ENCODE measurements at regions of chr18 and their contacts with region 1.

Region 1: DNA sequence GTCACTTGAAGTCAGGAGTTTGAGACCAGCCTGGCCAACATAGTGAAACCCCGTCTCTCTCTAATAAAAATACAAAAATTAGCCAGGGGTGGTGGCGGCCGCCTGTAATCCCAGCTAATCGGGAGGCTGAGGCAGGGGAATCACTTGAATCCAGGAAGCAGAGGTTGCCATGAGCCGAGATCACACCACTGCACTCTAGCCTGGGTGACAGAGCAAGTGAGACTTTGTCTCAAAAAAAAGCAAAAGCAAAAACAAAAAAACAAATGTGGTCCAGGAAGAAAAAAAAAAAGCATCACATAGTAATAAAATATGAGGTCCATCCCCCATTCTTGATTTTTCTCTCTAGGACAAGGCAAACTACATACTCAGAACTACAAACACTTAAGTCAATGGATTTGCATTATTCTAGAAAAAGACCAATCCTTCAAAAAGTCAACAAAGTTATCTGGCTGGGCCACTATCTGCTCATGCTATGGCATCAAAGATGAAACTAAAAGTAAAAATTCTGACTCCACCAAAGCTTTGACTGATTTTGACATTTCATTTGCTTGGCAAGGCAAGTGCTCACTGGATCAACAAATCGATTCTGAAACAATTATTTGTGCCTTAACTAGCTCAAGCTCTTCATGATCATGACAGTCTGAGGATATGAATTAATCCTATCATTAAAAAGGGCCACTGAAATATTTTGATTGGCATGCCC is 28.4 kb downstream of the MEX3C start:
- DNase-seq: no peak
- H3K4me3 ChIP-seq: no peak overlapping the region
- H3K4me3 Mint-ChIP-seq: no peak overlapping the region
- H3K27ac ChIP-seq: no peak overlapping the region
- H3K27ac Mint-ChIP-seq: peak overlapping the region in 1 of 7 donors; percentile 76
- H3K4me1 ChIP-seq: peaks cover 0 to 5% of the 10 kb centered on the region in 2 donors
- H3K4me1 Mint-ChIP-seq: peaks cover 13% of the 10 kb centered on the region
- H3K27me3 ChIP-seq: no peaks in the 10 kb centered on the region
- H3K27me3 Mint-ChIP-seq: peaks cover 0 to 2% (median 0%) of the 10 kb centered on the region in 3 donors
- CTCF ChIP-seq: no peak

Region 2: DNA sequence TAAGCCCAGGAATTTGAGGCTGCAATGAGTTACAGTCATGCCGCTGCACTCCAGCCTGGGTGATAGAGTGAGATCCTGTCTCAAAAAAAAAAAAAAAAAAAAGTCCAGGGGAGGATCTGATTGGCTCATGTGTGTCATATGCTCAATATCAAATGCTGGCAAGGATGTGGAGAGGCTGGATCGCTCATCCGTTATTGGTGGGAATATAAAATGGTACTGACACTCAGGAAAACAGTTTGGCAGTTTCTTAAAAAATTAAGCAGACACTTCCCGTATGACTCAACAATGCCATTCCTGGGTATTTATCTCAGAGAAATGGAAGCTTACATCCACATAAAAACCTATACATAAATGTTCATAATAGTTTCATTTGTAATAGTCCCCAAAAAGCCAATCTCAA is 40.6 kb before region 1 on chr18:
- intact Hi-C with region 1: no loop called
- DNase-seq: no peak
- H3K4me3 ChIP-seq: no peak overlapping the region
- H3K4me3 Mint-ChIP-seq: no peak overlapping the region
- H3K27ac ChIP-seq: no peak overlapping the region
- H3K27ac Mint-ChIP-seq: no peak overlapping the region
- H3K4me1 ChIP-seq: no peaks in the 10 kb centered on the region
- H3K4me1 Mint-ChIP-seq: no peaks in the 10 kb centered on the region
- H3K27me3 ChIP-seq: no peaks in the 10 kb centered on the region
- H3K27me3 Mint-ChIP-seq: peaks cover 1 to 4% (median 2%) of the 10 kb centered on the region in 3 donors
- CTCF ChIP-seq: no peak

Region 3: GRCh38 chr18:51290860-51291259 is 121.7 kb after region 1 on chr18:
- intact Hi-C with region 1: loop called in 1 of 2 experiments (anchors 10 kb)
- DNase-seq: no peak
- H3K4me3 ChIP-seq: no peak overlapping the region
- H3K4me3 Mint-ChIP-seq: no peak overlapping the region
- H3K27ac ChIP-seq: no peak overlapping the region
- H3K27ac Mint-ChIP-seq: no peak overlapping the region
- H3K4me1 ChIP-seq: no peaks in the 10 kb centered on the region
- H3K4me1 Mint-ChIP-seq: no peaks in the 10 kb centered on the region
- H3K27me3 ChIP-seq: no peaks in the 10 kb centered on the region
- H3K27me3 Mint-ChIP-seq: peaks cover 3 to 5% (median 3%) of the 10 kb centered on the region in 3 donors
- CTCF ChIP-seq: no peak